Mammary epithelial cell (primary cell): ENCODE measurements at regions of chr10 and their contacts with region 1.

Region 1: GRCh38 chr10:132371641-132372081 is 25.3 kb upstream of the PWWP2B start:
- DNase-seq: no peak
- H3K4me3 ChIP-seq: no peak overlapping the region
- H3K27ac ChIP-seq: no peak overlapping the region
- H3K4me1 ChIP-seq: no peaks in the 10 kb centered on the region
- H3K27me3 ChIP-seq: no peaks in the 10 kb centered on the region
- CTCF ChIP-seq: peak; percentile 13 to 34

Region 2: GRCh38 chr10:132299371-132300336 is 72.0 kb before region 1 on chr10:
- CTCF ChIA-PET with region 1: no interaction called
- dilution Hi-C with region 1: loop called (anchors 5 kb)
- in situ Hi-C with region 1: no loop called
- intact Hi-C with region 1: no loop called
- DNase-seq: no peak
- H3K4me3 ChIP-seq: no peak overlapping the region
- H3K27ac ChIP-seq: no peak overlapping the region
- H3K4me1 ChIP-seq: no peaks in the 10 kb centered on the region
- H3K27me3 ChIP-seq: no peaks in the 10 kb centered on the region
- CTCF ChIP-seq: no peak